Prostate gland (tissue), 2 donors: ENCODE measurements at regions of chr5 and their contacts with region 1.

Region 1: DNA sequence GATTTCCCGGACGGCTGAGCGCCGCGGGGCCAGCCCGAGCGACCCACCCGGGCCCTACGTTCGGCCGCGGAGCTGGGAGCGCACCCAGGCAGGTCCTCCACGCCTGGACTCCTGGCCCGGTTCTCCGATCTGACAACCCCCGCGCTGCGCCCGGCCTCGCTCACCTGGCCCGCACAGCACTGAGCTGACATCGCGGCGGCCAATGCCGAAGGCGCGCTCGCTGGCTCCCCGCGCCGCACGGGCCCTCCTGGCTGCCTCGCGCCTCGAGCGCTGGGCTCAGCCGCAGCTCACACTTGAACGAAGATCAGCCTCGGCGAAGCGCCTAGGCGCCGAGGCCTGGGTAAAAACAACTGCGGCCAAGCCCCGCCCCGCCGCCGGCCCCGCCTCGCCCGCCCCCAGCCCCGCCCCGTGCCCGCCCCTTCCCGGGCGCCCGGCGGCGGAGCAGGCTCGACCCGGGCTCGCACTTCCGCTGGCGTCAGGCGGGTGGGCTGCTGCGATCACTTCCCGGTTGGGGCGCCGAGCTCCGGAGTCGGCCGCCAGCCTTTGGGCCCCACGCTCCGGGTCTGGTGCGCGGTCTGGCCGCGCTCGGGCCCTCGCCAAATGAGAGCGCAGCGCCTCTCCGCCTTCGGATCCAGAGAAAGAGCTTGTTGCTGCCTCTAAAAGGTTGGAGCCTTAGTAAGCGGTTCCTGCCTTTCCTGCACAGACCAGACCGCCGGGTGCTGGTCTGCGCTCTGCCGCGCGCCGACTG is at the start of gene SERINC5:
- DNase-seq: peak; percentile 83
- H3K4me3 ChIP-seq: peak within 1 kb of the TSS; percentile 72 to 83
- H3K27ac ChIP-seq: peak within 1 kb of the TSS; percentile 89 to 95
- H3K4me1 ChIP-seq: peaks cover 8% of the 10 kb centered on the region
- H3K27me3 ChIP-seq: no peaks in the 10 kb centered on the region
- CTCF ChIP-seq: peak in 2 of 4 experiments; percentile 8 to 26
- POLR2A ChIP-seq: peak; percentile 81
- total RNA-seq, gene SERINC5: 127 to 205 TPM

Region 2: GRCh38 chr5:80141147-80141671 is 114.7 kb before region 1 on chr5:
- intact Hi-C with region 1: loop called (anchors 5 kb)
- DNase-seq: peak; percentile 17
- H3K4me3 ChIP-seq: no peak overlapping the region
- H3K27ac ChIP-seq: peak overlapping the region; percentile 49 to 58
- H3K4me1 ChIP-seq: no peaks in the 10 kb centered on the region
- H3K27me3 ChIP-seq: no peaks in the 10 kb centered on the region
- CTCF ChIP-seq: no peak
- POLR2A ChIP-seq: no peak

Region 3: GRCh38 chr5:80191991-80192398 is 63.9 kb before region 1 on chr5:
- intact Hi-C with region 1: loop called (anchors 2 kb)
- DNase-seq: no peak
- H3K4me3 ChIP-seq: no peak overlapping the region
- H3K27ac ChIP-seq: peak overlapping the region; percentile 63 to 68
- H3K4me1 ChIP-seq: peaks cover 22% of the 10 kb centered on the region
- H3K27me3 ChIP-seq: no peaks in the 10 kb centered on the region
- CTCF ChIP-seq: no peak
- POLR2A ChIP-seq: no peak

Region 4: GRCh38 chr5:80407735-80408482 is 152.0 kb after region 1 on chr5 and contains the start of gene ZFYVE16:
- intact Hi-C with region 1: loop called (anchors 5 kb)
- DNase-seq: peak; percentile 98
- H3K4me3 ChIP-seq: peak within 1 kb of the TSS; percentile 90 to 94
- H3K27ac ChIP-seq: peak within 1 kb of the TSS; percentile 95 to 97
- H3K4me1 ChIP-seq: no peaks in the 10 kb centered on the region
- H3K27me3 ChIP-seq: no peaks in the 10 kb centered on the region
- CTCF ChIP-seq: peak in 2 of 4 experiments; percentile 48 to 57
- POLR2A ChIP-seq: peak; percentile 86
- total RNA-seq, gene ZFYVE16: 29.4 to 41.1 TPM